Sigmoid colon (tissue), 7 donors: ENCODE measurements at regions of chr11 and their contacts with region 1.

Region 1: GRCh38 chr11:111299101-111300026 is 1.0 kb downstream of the POU2AF3 start:
- DNase-seq: peak; percentile 83
- H3K4me3 ChIP-seq: peak overlapping the region; percentile 76 to 93 (median 88)
- H3K27ac ChIP-seq: peak overlapping the region; percentile 77 to 96 (median 93)
- H3K4me1 ChIP-seq: peaks cover 0 to 48% (median 31%) of the 10 kb centered on the region in 4 donors
- H3K27me3 ChIP-seq: no peaks in the 10 kb centered on the region
- CTCF ChIP-seq: peak; percentile 67 to 70 (median 68)
- EP300 ChIP-seq: no peak
- POLR2A ChIP-seq: peak in 1 of 2 donors; percentile 9

Region 2: DNA sequence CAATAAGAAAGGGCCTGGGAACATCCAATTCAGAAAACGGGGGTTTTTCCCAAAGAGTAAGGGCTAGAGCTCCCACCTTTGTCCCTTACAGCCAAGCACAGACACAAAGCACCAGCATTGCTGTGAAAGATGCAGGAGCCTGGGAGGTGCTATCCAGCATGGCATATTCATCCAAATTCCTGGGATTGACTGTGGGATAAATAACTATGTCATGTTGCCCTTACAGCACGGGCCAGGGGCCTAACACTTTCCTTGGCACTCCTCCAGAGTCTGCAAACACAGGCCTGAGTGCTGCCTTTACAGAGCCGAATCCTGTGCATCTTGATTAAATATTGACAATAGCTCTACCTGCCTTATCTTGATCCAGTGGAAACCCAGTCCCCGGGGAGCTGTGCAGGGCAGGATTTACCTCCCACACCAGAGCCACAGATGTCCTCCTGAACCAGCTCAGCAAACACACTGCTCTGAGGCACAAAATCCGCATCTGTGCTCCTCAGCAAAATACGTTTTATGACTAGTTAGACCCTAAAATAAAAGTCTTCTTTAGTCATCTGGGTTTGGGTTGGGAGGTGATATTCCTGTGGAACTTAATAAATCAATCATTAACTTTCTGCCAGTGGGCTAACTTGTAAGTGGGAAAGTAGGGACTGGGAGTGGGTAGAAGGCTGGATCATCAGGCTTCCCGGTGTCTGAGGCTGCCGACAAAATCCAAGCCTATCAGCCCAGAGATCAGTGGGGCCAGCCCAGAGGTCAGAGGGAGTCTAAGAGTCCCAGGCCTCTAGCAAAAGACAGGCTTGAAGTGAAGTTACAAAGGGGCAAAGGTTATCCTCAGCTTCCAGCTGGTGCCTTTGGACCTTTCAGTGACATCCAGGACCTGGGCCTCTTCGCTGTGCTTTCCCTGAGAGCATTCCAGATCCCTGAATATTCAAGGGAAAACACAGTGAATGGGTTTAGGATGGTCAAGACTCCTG is 35.5 kb after region 1 on chr11:
- intact Hi-C with region 1: loop called (anchors 5 kb)
- DNase-seq: no peak
- H3K4me3 ChIP-seq: no peak overlapping the region
- H3K27ac ChIP-seq: peak overlapping the region in 1 of 4 donors; percentile 30
- H3K4me1 ChIP-seq: peaks cover 0 to 46% (median 35%) of the 10 kb centered on the region in 4 donors
- H3K27me3 ChIP-seq: no peaks in the 10 kb centered on the region
- CTCF ChIP-seq: no peak
- EP300 ChIP-seq: no peak
- POLR2A ChIP-seq: no peak

Region 3: GRCh38 chr11:111441443-111441842 is 142.1 kb after region 1 on chr11:
- intact Hi-C with region 1: loop called (anchors 5 kb)
- DNase-seq: peak; percentile 78
- H3K4me3 ChIP-seq: no peak overlapping the region
- H3K27ac ChIP-seq: peak overlapping the region in 3 of 4 donors; percentile 74 to 81 (median 77)
- H3K4me1 ChIP-seq: peaks cover 0 to 57% (median 51%) of the 10 kb centered on the region in 4 donors
- H3K27me3 ChIP-seq: no peaks in the 10 kb centered on the region
- CTCF ChIP-seq: no peak
- EP300 ChIP-seq: peak; percentile 3 to 91 (median 81)
- POLR2A ChIP-seq: no peak